IMR-90 (cell line): ENCODE measurements at regions of chr5 and their contacts with region 1.

Region 1: DNA sequence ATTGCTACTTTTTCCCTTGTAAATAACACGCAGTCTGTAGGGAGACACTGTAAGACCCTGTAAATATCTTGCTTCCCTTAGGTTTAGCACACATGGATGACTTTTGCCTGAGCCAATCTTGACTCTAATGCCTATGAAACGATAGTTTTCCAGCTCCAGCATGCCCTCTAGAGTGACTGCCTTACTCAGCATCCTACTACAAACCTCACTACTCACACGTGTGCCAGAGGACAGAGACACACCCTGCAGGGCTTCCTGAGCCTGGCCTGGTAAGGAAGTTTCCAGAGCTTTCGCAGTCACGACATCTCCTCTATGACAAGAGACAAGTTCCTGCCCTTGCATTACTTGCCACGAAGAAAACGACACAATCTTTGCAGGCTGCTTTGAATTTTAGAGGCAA is 138.1 kb downstream of the ATPSCKMT start:
- DNase-seq: peak; percentile 54
- ATAC-seq: peak; percentile 91
- H3K4me3 ChIP-seq: no peak overlapping the region
- H3K27ac ChIP-seq: no peak overlapping the region
- H3K4me1 ChIP-seq: no peaks in the 10 kb centered on the region
- H3K27me3 ChIP-seq: no peaks in the 10 kb centered on the region
- CTCF ChIP-seq: peak; percentile 54
- POLR2A ChIP-seq: no peak
- RAD21 ChIP-seq: peak; percentile 63

Region 2: DNA sequence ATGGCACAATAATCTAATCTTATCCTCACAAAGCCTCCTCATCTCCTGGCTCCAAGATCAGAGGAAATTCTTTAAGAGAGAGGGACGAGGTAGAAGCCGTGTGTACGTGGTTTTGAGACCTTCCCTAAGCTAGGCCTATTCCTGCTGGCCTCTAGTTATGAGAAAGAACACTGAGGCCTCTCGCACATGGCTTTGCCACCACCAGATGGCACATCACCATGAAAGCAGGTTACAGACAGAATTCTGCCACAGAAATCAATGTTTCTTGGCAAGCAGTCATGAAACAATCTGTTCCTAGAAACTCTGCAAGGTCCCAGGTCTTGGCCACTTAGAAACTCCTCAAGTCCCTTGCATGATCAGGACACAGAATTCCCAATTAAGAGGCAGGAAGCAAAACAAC is 213.3 kb before region 1 on chr5:
- CTCF ChIA-PET with region 1: no interaction called
- POLR2A ChIA-PET with region 1: no interaction called
- dilution Hi-C with region 1: no loop called
- in situ Hi-C with region 1: no loop called
- intact Hi-C with region 1: loop called (anchors 2 kb)
- DNase-seq: peak; percentile 49
- ATAC-seq: peak; percentile 44; the same call in 1 of the 2 replicates
- H3K4me3 ChIP-seq: no peak overlapping the region
- H3K27ac ChIP-seq: no peak overlapping the region
- H3K4me1 ChIP-seq: no peaks in the 10 kb centered on the region
- H3K27me3 ChIP-seq: no peaks in the 10 kb centered on the region
- CTCF ChIP-seq: peak; percentile 53
- POLR2A ChIP-seq: no peak
- RAD21 ChIP-seq: peak; percentile 59